ENCODE measurements at regions of chr7 and their contacts with region 1.

Region 1: GRCh38 chr7:151351027-151351426 is 9.4 kb downstream of the NUB1 start:
- DNase-seq: no peak
- ATAC-seq: no peak

Region 2: DNA sequence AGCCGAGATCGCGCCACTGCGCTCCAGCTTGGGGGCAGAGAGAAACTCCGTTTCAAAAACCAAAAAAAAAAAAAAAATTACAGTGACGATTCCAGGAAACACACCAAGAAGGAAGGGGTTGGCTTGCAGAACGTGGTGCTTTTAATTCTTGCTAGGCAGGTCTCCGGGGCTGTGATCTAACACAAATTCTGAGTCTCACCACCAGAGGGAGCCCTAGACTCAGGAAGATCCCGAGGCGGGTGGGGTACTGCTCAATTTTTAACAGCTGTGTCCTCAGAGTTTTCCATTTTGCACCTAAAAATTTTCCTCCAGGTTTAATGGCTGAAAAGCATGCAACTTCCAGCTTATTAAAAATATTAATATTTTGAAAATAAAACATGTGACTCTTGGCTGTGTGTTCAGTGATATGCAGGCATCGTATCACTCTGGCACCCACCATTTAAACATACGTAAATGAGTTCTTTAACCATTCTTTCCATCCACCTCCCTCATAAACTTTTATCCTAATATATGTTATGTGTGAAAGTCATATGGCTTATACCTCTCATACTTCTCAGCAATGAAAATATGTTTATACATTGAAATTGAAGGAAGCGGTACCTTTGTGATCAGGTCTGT is 35.9 kb before region 1 on chr7:
- intact Hi-C with region 1: loop called (anchors 5 kb)
- DNase-seq: peak; percentile 85
- ATAC-seq: peak; percentile 91

Region 3: DNA sequence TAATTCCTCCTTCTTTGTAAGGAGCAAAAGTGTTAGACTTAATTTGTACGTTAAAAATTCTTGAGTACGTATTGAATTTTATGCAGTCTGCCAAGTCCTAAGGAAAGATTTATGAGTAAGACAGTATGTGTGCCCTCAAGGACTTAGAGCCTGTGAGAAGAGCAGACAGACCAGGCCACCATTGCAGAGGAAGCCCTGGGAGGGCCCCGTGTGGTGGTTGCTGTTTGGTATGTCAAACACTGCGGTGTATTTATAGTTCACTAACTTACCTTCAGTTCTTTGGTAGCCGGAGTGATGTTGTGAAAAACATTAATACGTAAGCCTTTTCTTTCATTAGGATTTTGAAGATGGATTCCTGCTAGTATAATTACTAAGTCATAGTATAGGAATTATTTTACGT is 757.3 kb after region 1 on chr7:
- intact Hi-C with region 1: no loop called
- DNase-seq: no peak
- ATAC-seq: no peak